Esophagus muscularis mucosa (tissue), 4 donors: ENCODE measurements at regions of chr9 and their contacts with region 1.

Region 1: GRCh38 chr9:127785023-127785932 is 556 bp upstream of the CDK9 start:
- DNase-seq: peak; percentile 97
- H3K4me3 ChIP-seq: peak overlapping the region; percentile 73 to 99 (median 87)
- H3K27ac ChIP-seq: peak overlapping the region; percentile 92 to 98 (median 97)
- H3K4me1 ChIP-seq: peaks cover 47 to 58% (median 49%) of the 10 kb centered on the region in 4 donors
- H3K27me3 ChIP-seq: no peaks in the 10 kb centered on the region
- CTCF ChIP-seq: peak; percentile 94 to 99 (median 99)
- EP300 ChIP-seq: no peak
- POLR2A ChIP-seq: no peak

Region 2: DNA sequence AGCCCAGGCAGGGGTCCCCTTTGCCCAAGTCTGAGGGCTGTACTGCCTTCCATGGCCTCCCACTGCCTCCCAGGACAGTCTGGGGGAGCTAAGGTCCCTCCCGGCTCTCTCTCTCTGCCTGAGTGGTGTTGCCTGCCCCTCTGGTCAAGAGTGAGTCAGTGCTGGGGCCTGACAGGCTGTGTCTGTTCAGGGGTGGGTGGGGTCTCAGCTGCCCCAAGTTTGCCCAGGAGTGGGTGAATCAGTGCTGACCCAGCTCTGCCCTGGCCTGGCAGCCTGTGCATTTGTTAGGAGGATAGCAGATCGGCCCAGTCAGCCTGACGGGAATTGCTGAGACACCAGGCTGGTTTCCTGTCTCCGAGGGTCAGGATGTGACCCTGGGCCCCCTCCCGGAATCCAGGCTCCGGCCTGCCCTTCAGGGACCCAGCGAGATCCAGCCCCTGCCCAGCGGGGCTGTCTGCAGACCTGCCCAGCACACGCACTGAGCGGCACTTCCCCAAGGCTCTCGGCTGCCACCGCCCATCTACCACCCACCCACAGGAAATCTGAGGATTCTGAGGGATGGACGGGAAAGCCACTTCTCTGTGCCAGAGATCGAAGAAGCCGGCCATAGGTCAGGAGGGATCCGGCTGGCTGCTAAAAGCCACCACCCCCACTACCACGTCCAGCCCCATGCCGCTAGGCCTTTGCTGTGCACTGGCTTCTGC is 53.2 kb after region 1 on chr9:
- intact Hi-C with region 1: no loop called
- DNase-seq: peak; percentile 94
- H3K4me3 ChIP-seq: peak overlapping the region in 2 of 4 donors; percentile 14 to 18
- H3K27ac ChIP-seq: peak overlapping the region; percentile 75 to 87 (median 80)
- H3K4me1 ChIP-seq: peaks cover 62 to 82% (median 77%) of the 10 kb centered on the region in 4 donors
- H3K27me3 ChIP-seq: no peaks in the 10 kb centered on the region
- CTCF ChIP-seq: no peak
- EP300 ChIP-seq: peak; percentile 29
- POLR2A ChIP-seq: no peak

Region 3: DNA sequence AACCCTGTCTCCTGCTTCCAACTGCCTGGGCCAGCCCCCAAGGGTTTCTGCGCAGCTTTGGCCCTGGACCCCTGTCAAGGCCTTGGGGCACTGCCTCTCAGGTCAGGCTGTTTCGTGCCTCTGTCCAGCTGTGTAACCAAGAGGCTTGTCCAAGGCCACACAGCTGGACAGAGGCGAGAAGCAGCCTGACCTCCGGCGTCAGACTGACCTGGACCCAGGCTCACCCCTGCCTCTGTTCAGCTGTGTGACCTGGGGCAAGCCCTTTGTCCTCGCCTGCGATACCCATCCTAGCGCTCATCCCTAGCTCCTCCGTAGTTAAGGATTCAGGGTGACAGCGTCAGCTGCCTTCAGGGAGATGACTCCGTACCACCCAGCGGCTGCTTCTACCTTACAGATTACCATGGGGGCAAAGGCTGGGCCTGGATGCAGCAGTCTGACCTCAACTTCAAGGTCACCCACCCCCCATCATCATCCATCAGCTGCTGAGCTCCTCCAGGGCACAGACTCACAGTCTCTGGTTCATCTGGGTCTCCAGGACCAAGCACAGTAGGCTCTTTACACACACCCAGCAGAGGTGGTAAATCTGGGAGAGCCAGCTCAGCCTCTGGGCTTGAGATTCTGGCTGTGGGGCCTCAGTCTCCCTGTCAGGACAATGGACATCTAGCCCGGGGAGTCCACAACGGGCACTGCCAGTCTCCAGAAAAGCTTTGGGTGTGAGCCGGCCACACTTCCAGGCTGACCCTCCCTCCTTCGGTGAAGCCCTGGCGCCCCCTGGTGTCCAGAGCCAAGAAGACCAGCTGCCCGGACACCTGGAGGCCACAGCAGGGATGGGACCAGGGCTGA is 84.3 kb after region 1 on chr9:
- intact Hi-C with region 1: loop called (anchors 5 kb)
- DNase-seq: peak; percentile 96
- H3K4me3 ChIP-seq: no peak overlapping the region
- H3K27ac ChIP-seq: peak overlapping the region in 2 of 4 donors; percentile 30 to 35
- H3K4me1 ChIP-seq: peaks cover 27 to 43% (median 32%) of the 10 kb centered on the region in 4 donors
- H3K27me3 ChIP-seq: no peaks in the 10 kb centered on the region
- CTCF ChIP-seq: peak; percentile 79 to 87 (median 81)
- EP300 ChIP-seq: no peak
- POLR2A ChIP-seq: no peak

Region 4: GRCh38 chr9:128001779-128002298 is 216.6 kb after region 1 on chr9:
- intact Hi-C with region 1: no loop called
- DNase-seq: no peak
- H3K4me3 ChIP-seq: no peak overlapping the region
- H3K27ac ChIP-seq: no peak overlapping the region
- H3K4me1 ChIP-seq: peaks cover 0 to 8% (median 7%) of the 10 kb centered on the region in 4 donors
- H3K27me3 ChIP-seq: no peaks in the 10 kb centered on the region
- CTCF ChIP-seq: no peak
- EP300 ChIP-seq: no peak
- POLR2A ChIP-seq: no peak